ENCODE measurements at regions of chr6 and their contacts with region 1.

Region 1: GRCh38 chr6:111651185-111652034 is 45.7 kb upstream of the TRAF3IP2 start:
- H3K4me3 Mint-ChIP-seq: no peak overlapping the region
- H3K27ac Mint-ChIP-seq: no peak overlapping the region
- H3K4me1 Mint-ChIP-seq: no peaks in the 10 kb centered on the region
- H3K27me3 Mint-ChIP-seq: no peaks in the 10 kb centered on the region

Region 2: GRCh38 chr6:111250791-111251354 is 400.5 kb before region 1 on chr6:
- intact Hi-C with region 1: loop called (anchors 5 kb)
- H3K4me3 Mint-ChIP-seq: no peak overlapping the region
- H3K27ac Mint-ChIP-seq: no peak overlapping the region
- H3K4me1 Mint-ChIP-seq: no peaks in the 10 kb centered on the region
- H3K27me3 Mint-ChIP-seq: peaks cover 6% of the 10 kb centered on the region

Region 3: GRCh38 chr6:111605100-111605751 is 46.2 kb before region 1 on chr6:
- intact Hi-C with region 1: no loop called
- H3K4me3 Mint-ChIP-seq: peak overlapping the region; percentile 81
- H3K27ac Mint-ChIP-seq: peak overlapping the region; percentile 75
- H3K4me1 Mint-ChIP-seq: peaks cover 42% of the 10 kb centered on the region
- H3K27me3 Mint-ChIP-seq: no peaks in the 10 kb centered on the region

Measured in dendritic cell treated with granulocyte-macrophage colony-stimulating factor and Interleukin-4, amounts not matched to agents 40 ng/mL and 50 ng/mL, for 4 days (primary cell).